K562 (cell line): ENCODE measurements at regions of chrX and their contacts with region 1.

Region 1: DNA sequence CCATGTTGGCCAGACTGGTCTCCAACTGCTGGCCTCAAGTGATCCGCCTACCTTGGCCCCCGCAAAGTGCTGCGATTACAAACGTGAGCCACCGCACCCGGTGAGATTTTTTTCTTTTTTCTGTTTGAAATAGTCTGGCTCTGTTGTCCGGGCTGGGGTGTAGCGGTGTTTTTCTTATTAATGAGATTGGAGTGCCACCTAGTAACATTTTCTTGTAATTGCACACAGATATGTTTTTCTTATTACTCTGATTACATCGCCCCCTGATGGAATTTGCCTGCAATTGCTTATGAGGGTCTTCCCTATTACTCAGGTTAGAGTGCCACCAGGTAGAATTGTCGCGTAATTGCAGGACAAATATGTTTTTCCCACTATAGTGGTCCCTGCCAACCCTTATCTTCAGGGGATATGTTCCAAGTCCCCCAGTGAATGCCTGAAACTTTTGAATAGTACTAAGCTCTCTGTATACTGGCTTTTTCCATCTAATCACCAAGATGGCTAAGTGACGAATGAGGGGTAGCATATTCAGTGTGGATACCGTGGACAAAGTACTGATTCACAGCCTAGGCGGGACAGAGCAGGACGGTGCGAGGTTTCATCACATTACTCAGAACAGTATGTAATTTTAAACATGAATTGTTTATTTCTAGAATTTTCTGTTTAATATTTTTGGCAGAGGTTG is 8.6 kb upstream of the PDHA1 start:
- DNase-seq: peak; percentile 27 to 59 (median 46)
- ATAC-seq: peak; percentile 83
- H3K4me3 ChIP-seq: no peak overlapping the region
- H3K27ac ChIP-seq: no peak overlapping the region
- H3K4me1 ChIP-seq: no peaks in the 10 kb centered on the region
- H3K27me3 ChIP-seq: peaks cover 5 to 24% of the 10 kb centered on the region in 2 experiments; a peak in 4 of 5 replicates
- CTCF ChIP-seq: peak; percentile 78 to 98 (median 98)
- EP300 ChIP-seq: no peak
- POLR2A ChIP-seq: no peak
- RAD21 ChIP-seq: peak; percentile 28 to 60; a peak in 3 of 4 replicates

Region 2: DNA sequence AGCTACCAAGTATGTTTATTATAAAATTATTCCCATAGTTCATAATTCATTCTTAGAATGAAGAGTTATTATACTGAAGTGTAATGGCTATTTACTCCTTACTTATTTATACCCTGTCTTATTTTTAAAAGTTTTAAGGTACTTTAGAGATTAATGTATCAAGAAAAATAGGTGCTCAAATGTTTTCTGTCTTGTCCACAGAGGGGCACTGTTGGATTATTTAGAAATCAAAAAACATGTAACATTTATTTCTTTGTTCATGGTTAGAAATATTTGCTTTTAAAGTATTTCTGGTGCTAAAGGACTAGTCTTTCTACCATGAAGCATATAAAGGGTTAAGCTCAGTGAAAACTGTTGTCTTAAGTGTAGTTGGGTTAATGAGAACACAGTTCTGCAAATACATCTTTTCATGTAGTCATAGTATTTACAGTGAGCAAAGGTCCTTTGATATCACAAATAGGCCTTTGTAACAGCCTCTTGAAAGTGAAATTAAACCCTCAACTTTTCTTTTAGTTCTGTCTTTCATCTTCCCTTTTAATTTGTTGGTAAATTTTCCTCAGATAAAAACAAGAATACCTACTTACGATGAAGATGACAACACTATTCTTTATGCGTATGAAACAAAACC is 1590.1 kb before region 1 on chrX:
- CTCF ChIA-PET with region 1: interaction called, 3 read pairs
- POLR2A ChIA-PET with region 1: no interaction called
- in situ Hi-C with region 1: no loop called
- intact Hi-C with region 1: loop called (anchors 5 kb)
- DNase-seq: no peak
- ATAC-seq: no peak
- H3K4me3 ChIP-seq: no peak overlapping the region
- H3K27ac ChIP-seq: no peak overlapping the region
- H3K4me1 ChIP-seq: no peaks in the 10 kb centered on the region
- H3K27me3 ChIP-seq: no peaks in the 10 kb centered on the region
- CTCF ChIP-seq: peak in 1 of 3 experiments; percentile 33; a peak in 1 of 6 replicates
- EP300 ChIP-seq: no peak
- POLR2A ChIP-seq: no peak
- RAD21 ChIP-seq: peak in 1 of 2 experiments; percentile 45; a peak in 3 of 4 replicates

Region 3: GRCh38 chrX:18390941-18391538 is 944.0 kb before region 1 on chrX:
- CTCF ChIA-PET with region 1: interaction called, 69 read pairs
- POLR2A ChIA-PET with region 1: no interaction called
- in situ Hi-C with region 1: loop called (anchors 5 kb)
- intact Hi-C with region 1: loop called (anchors 1 kb)
- DNase-seq: peak; percentile 28 to 59 (median 38)
- ATAC-seq: peak; percentile 61; the same call in 2 of the 3 replicates
- H3K4me3 ChIP-seq: no peak overlapping the region
- H3K27ac ChIP-seq: no peak overlapping the region
- H3K4me1 ChIP-seq: no peaks in the 10 kb centered on the region
- H3K27me3 ChIP-seq: peaks cover 3 to 18% of the 10 kb centered on the region in 2 experiments; a peak in 3 of 5 replicates
- CTCF ChIP-seq: peak; percentile 44 to 73 (median 56); a peak in 4 of 6 replicates
- EP300 ChIP-seq: no peak
- POLR2A ChIP-seq: no peak
- RAD21 ChIP-seq: peak; percentile 66 to 71

Region 4: GRCh38 chrX:18931972-18932371 is 403.1 kb before region 1 on chrX:
- CTCF ChIA-PET with region 1: interaction called, 17 read pairs
- POLR2A ChIA-PET with region 1: no interaction called
- in situ Hi-C with region 1: no loop called
- intact Hi-C with region 1: loop called (anchors 5 kb)
- DNase-seq: peak in 3 of 4 experiments; percentile 6 to 23 (median 19)
- ATAC-seq: peak; percentile 85
- H3K4me3 ChIP-seq: no peak overlapping the region
- H3K27ac ChIP-seq: no peak overlapping the region
- H3K4me1 ChIP-seq: no peaks in the 10 kb centered on the region
- H3K27me3 ChIP-seq: no peaks in the 10 kb centered on the region
- CTCF ChIP-seq: peak; percentile 47 to 58 (median 49)
- EP300 ChIP-seq: no peak
- POLR2A ChIP-seq: no peak
- RAD21 ChIP-seq: peak; percentile 28 to 47; a peak in 3 of 4 replicates

Region 5: DNA sequence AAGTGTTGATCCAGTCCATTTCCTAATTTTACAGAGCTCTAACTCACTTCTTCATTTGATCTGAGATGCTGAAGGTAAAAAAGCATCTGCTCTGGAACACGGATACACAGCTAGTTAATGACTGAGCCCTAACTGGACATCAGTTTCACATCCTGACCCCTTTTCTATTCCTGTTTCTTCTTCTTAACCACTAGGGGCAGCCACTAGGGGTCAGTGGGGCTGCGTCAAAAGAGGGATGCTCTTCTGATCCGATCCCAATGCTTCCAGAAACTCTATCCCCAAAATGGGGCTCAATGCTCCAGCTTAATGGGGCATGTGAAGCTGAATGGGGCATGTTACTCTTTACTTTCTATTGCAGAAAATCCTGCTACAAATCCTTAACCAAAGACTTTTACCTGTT is 317.8 kb before region 1 on chrX:
- CTCF ChIA-PET with region 1: interaction called, 14 read pairs
- POLR2A ChIA-PET with region 1: no interaction called
- in situ Hi-C with region 1: no loop called
- intact Hi-C with region 1: loop called (anchors 1 kb)
- DNase-seq: peak; percentile 30 to 49 (median 42)
- ATAC-seq: peak; percentile 75
- H3K4me3 ChIP-seq: no peak overlapping the region
- H3K27ac ChIP-seq: no peak overlapping the region
- H3K4me1 ChIP-seq: no peaks in the 10 kb centered on the region
- H3K27me3 ChIP-seq: peaks cover 0 to 14% of the 10 kb centered on the region in 2 experiments; a peak in 4 of 5 replicates
- CTCF ChIP-seq: peak; percentile 56 to 71 (median 67)
- EP300 ChIP-seq: no peak
- POLR2A ChIP-seq: no peak
- RAD21 ChIP-seq: peak in 1 of 2 experiments; percentile 62; a peak in 2 of 4 replicates

Region 6: DNA sequence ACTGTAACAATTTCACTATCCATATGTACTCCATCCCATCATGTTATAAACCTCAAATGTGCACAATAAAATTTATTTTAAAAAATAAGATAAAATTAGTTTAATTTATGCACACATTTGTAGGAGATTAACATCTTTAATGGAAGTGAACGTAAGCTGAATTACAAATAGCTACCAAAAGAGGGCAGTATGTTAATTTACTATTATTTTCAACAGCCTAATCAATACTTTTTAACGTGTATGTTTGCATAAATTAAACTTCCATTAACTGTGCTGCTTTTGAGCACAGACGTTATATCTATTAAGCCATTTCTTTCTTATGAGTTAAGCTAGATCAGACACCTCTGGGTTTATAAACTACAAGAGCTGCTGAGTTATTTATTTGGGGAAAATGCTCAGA is 294.7 kb before region 1 on chrX:
- CTCF ChIA-PET with region 1: interaction called, 6 read pairs
- POLR2A ChIA-PET with region 1: no interaction called
- in situ Hi-C with region 1: no loop called
- intact Hi-C with region 1: loop called (anchors 10 kb)
- DNase-seq: no peak
- ATAC-seq: no peak
- H3K4me3 ChIP-seq: no peak overlapping the region
- H3K27ac ChIP-seq: no peak overlapping the region
- H3K4me1 ChIP-seq: no peaks in the 10 kb centered on the region
- H3K27me3 ChIP-seq: no peaks in the 10 kb centered on the region
- CTCF ChIP-seq: peak in 2 of 3 experiments; percentile 10 to 25; a peak in 2 of 6 replicates
- EP300 ChIP-seq: no peak
- POLR2A ChIP-seq: no peak
- RAD21 ChIP-seq: peak in 1 of 2 experiments; percentile 13; a peak in 1 of 4 replicates

Region 7: DNA sequence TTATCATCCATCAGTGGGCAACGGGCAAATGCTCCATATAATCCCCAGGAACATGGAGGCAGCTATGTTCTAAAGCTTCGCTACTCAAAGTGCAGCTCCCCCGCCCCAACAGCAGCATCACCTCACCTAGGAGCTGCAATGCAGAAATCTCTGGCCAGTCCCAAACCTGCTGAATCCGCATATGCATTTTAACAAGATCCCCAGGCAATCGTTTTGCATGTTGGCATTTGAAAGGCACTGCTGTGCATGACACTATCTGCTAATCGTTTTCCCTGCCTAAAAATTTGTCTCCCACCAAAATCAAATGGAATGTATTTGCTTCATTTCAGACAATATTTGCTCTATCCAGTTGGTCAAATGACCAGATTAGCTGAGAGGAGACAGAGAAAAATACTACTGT is 228.1 kb before region 1 on chrX:
- CTCF ChIA-PET with region 1: interaction called, 4 read pairs
- POLR2A ChIA-PET with region 1: no interaction called
- in situ Hi-C with region 1: no loop called
- intact Hi-C with region 1: loop called (anchors 5 kb)
- DNase-seq: no peak
- ATAC-seq: no peak
- H3K4me3 ChIP-seq: no peak overlapping the region
- H3K27ac ChIP-seq: no peak overlapping the region
- H3K4me1 ChIP-seq: no peaks in the 10 kb centered on the region
- H3K27me3 ChIP-seq: no peaks in the 10 kb centered on the region; a peak in 1 of 5 replicates
- CTCF ChIP-seq: no peak
- EP300 ChIP-seq: no peak
- POLR2A ChIP-seq: no peak
- RAD21 ChIP-seq: no peak

Region 8: DNA sequence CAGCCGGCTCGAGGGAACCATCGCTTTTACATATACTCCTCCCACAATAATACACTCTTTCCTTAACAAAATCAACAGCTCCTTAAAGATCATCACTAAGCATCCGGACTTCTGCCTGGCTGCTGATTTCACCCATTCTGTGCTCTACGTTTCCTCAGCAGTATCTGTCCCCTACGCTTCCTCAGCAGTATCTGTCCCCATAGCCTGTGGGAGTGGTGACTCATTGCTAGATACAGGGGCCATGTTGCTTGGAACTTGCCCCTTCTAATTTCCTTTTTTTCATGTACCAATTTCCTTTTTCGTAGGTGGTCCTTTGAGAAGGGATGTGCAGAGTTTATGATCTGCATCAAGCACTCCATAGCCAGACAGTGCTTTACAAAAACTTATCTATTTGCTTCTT is 161.6 kb after region 1 on chrX:
- CTCF ChIA-PET with region 1: no interaction called
- POLR2A ChIA-PET with region 1: no interaction called
- in situ Hi-C with region 1: no loop called
- intact Hi-C with region 1: no loop called
- DNase-seq: peak in 1 of 4 experiments; percentile 2
- ATAC-seq: no peak
- H3K4me3 ChIP-seq: no peak overlapping the region
- H3K27ac ChIP-seq: no peak overlapping the region
- H3K4me1 ChIP-seq: no peaks in the 10 kb centered on the region
- H3K27me3 ChIP-seq: peaks cover 0 to 4% of the 10 kb centered on the region in 2 experiments; a peak in 3 of 5 replicates
- CTCF ChIP-seq: no peak
- EP300 ChIP-seq: no peak
- POLR2A ChIP-seq: no peak
- RAD21 ChIP-seq: no peak

Region 9: DNA sequence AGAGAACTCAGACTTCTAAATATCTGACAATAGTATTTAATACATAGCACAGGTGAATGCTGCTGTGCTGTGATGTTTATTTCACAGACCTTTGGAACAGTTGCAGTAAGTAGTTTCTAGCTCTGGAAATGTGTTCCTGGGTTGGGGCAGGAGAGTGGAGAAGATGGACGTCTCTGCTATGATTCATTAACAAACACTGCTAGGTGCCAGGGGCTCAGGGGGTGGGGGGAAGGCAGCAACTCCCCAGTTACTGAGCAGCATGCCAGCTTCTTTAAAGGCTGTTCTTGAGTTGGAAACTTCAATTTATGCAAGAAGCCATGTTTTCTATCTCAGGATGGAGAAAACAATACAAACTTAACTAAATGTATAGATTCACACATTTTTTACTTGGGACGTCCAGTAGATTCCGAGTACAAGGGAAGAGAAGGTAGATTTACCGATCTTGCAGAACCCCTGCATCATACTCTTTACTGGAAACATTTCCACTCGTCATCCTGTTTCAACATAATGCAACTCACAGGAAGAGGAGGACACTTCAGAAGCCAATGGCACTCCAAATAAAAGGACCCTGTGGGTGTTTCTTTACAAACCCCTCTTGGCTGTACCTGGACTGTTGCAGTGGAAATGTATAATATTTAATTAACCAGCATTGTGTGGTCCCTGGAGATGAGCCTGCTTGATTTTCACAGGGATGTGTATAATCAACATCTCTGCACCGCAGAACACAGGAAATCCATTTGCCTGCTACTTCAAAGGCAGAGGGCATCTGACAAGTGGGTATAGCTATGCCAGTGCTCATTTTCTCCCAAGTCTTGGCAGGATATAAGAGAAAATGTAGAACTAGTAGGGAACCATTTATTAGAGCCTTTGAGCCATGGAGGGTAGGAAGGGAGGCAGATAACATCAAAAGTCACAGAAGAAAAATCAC is 380.9 kb after region 1 on chrX:
- CTCF ChIA-PET with region 1: no interaction called
- POLR2A ChIA-PET with region 1: no interaction called
- in situ Hi-C with region 1: no loop called
- intact Hi-C with region 1: no loop called
- DNase-seq: no peak
- ATAC-seq: no peak
- H3K4me3 ChIP-seq: no peak overlapping the region
- H3K27ac ChIP-seq: no peak overlapping the region
- H3K4me1 ChIP-seq: no peaks in the 10 kb centered on the region; a peak in 1 of 5 replicates
- H3K27me3 ChIP-seq: no peaks in the 10 kb centered on the region
- CTCF ChIP-seq: no peak
- EP300 ChIP-seq: no peak
- POLR2A ChIP-seq: no peak
- RAD21 ChIP-seq: no peak